Left lung (tissue), 14 donors: ENCODE measurements at regions of chr1 and their contacts with region 1.

Region 1: DNA sequence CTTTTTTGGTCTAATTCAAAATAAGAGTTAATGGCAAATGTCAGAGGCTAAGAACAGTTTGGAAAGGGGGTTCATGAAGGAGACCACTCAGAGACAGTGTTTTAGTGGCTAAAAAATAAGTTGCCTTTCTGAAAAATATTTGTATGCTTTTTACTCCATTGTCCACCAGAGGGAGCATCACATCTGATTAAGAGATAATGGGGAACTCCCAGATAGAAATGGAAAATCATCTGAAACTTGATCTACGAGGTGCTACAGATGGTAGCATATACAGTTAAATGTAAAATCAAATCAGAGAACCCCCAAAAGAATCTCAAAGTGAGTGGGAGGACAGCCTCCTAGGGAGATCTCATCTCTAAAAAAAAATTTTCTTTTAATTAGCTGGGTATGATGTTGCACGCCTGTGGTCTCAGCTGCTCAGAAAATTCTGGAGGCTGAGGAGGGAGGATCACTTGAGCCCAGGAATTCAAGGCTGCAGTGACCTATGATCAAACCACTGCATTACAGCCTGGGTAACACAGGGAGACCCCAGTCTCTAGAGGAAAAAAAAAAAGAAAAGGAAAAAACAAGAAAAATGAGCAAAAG is 9.7 kb downstream of the SMYD3 start:
- DNase-seq: peak in 1 of 4 donors; percentile 73
- ATAC-seq: peak; percentile 69
- H3K4me3 ChIP-seq: no peak overlapping the region
- H3K27ac ChIP-seq: no peak overlapping the region
- H3K4me1 ChIP-seq: peaks cover 0 to 6% of the 10 kb centered on the region in 2 donors
- H3K27me3 ChIP-seq: no peaks in the 10 kb centered on the region
- CTCF ChIP-seq: peak; percentile 67 to 68

Region 2: DNA sequence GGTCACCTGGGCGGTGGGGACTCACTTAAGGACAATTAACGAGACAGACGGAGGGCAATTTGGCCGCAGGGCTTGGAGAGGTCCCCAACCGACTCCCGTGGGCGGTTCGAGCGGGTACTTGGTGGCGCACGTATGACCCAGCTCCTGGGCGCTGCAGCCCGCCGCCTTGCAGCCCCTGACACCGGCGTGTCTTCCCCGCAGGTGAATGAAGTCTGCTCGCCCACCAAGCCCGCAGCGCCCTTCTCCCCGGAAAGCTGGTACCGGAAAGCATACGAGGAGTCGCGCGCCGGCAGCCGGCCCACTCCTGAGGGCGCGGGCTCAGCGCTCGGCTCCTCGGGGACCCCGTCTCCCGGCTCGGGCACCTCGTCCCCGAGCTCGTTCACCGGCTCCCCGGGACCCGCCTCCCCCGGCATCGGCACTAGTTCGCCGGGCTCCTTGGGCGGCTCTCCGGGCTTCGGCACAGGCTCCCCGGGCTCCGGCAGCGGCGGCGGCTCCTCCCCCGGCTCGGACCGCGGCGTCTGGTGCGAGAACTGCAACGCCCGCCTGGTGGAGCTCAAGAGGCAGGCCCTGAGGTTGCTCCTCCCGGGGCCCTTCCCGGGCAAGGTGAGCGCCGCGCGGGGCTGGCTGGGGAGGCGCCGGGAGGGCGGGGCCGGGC is 1341.2 kb before region 1 on chr1:
- intact Hi-C with region 1: loop called in 1 of 2 experiments (anchors 5 kb)
- DNase-seq: peak; percentile 68 to 95 (median 87)
- ATAC-seq: peak; percentile 94
- H3K4me3 ChIP-seq: peak overlapping the region; percentile 39 to 48
- H3K27ac ChIP-seq: no peak overlapping the region
- H3K4me1 ChIP-seq: peaks cover 4 to 47% of the 10 kb centered on the region in 2 donors
- H3K27me3 ChIP-seq: peaks cover 0 to 72% of the 10 kb centered on the region in 2 donors
- CTCF ChIP-seq: peak; percentile 81

Region 3: GRCh38 chr1:246383239-246383589 is 114.2 kb before region 1 on chr1:
- intact Hi-C with region 1: no loop called
- DNase-seq: no peak
- ATAC-seq: no peak
- H3K4me3 ChIP-seq: no peak overlapping the region
- H3K27ac ChIP-seq: no peak overlapping the region
- H3K4me1 ChIP-seq: no peaks in the 10 kb centered on the region
- H3K27me3 ChIP-seq: no peaks in the 10 kb centered on the region
- CTCF ChIP-seq: no peak

Region 4: DNA sequence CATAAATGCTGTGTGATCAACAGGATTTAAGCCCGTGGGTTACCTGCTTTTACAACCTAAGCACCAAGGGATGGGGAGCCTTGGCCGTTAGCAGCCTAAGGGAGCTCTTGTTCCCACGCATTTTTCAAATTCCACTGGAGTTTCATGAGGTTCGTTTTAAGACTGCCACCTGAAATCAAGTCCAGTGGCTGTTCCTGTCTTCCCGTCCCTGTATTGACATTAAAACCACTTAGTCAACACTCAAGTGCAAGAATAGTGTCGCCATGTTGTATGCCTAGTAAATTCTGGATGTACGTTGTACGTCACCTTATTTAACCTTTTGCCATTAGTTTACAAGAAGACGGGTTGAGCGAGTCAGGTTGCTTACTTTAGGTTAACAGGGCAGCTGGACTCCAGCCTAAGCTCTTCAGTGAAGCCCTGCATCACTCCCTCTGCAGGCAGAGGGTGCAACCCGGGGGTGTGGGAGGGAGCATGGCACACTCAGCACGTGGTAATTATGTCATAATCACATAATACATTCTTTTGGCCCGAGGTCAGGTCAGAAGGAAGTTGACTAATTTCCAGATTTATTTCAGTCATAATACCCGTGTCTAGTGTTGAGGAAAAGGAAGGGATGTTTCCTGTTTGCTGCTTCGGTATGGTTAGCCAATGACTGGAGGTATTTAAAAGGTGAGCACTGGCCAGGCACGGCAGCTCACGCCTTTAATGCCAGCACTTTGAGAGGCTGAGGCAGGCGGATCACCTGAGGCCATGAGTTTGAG is 111.4 kb after region 1 on chr1:
- intact Hi-C with region 1: no loop called
- DNase-seq: peak; percentile 57 to 91 (median 88)
- ATAC-seq: peak; percentile 97
- H3K4me3 ChIP-seq: no peak overlapping the region
- H3K27ac ChIP-seq: peak overlapping the region; percentile 67 to 80
- H3K4me1 ChIP-seq: peaks cover 9 to 25% of the 10 kb centered on the region in 2 donors
- H3K27me3 ChIP-seq: no peaks in the 10 kb centered on the region
- CTCF ChIP-seq: peak in 1 of 2 donors; percentile 21

Region 5: DNA sequence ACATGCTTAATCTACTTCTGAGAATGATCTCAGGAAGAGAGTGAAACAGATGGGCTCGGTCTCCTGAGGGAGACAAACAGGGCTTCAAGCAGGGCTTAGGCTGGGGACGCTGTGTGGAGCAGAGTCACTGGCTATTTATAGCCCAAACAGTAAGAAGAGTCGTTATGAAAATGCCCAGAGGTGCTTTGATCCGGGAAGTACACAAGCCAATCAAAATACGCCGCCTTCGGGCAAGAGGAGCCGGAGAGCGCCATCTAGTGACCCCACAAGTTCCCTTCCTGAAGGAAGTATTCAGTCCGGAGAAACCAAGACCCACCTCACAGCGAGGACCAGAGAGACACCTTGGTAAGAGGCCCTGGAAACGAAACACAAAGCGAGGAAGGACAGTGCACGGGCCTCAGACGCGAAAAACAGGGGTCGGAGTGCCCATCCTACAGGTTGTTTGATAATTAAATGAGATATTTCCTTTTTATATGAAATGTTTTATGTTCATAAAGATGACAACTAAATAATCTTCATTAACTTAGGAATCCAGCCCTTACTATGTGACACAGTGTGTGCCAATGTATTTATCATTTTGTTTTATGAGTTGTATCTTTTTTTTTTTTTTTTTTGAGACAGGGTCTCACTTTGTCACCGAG is 201.8 kb after region 1 on chr1:
- intact Hi-C with region 1: loop called in 1 of 2 experiments (anchors 5 kb)
- DNase-seq: peak; percentile 75 to 89 (median 86)
- ATAC-seq: peak; percentile 96
- H3K4me3 ChIP-seq: peak overlapping the region; percentile 10 to 24
- H3K27ac ChIP-seq: peak overlapping the region in 1 of 2 donors; percentile 37
- H3K4me1 ChIP-seq: peaks cover 5 to 23% of the 10 kb centered on the region in 2 donors
- H3K27me3 ChIP-seq: no peaks in the 10 kb centered on the region
- CTCF ChIP-seq: peak; percentile 83 to 84

Region 6: GRCh38 chr1:246724016-246724730 is 226.8 kb after region 1 on chr1 and contains the start of gene SCCPDH:
- intact Hi-C with region 1: no loop called
- DNase-seq: peak; percentile 77 to 92 (median 82)
- ATAC-seq: peak; percentile 97
- H3K4me3 ChIP-seq: peak within 1 kb of the TSS; percentile 80 to 97
- H3K27ac ChIP-seq: peak within 1 kb of the TSS; percentile 77 to 85
- H3K4me1 ChIP-seq: peaks cover 3 to 29% of the 10 kb centered on the region in 2 donors
- H3K27me3 ChIP-seq: no peaks in the 10 kb centered on the region
- CTCF ChIP-seq: no peak
- polyA plus RNA-seq, gene SCCPDH: 40.6 to 45.0 (median 43.7) TPM

Region 7: GRCh38 chr1:246753670-246754535 is 256.5 kb after region 1 on chr1:
- intact Hi-C with region 1: loop called in 1 of 2 experiments (anchors 5 kb)
- DNase-seq: peak in 2 of 4 donors; percentile 28 to 58
- ATAC-seq: peak; percentile 90
- H3K4me3 ChIP-seq: no peak overlapping the region
- H3K27ac ChIP-seq: no peak overlapping the region
- H3K4me1 ChIP-seq: no peaks in the 10 kb centered on the region
- H3K27me3 ChIP-seq: no peaks in the 10 kb centered on the region
- CTCF ChIP-seq: peak; percentile 58 to 62

Region 8: GRCh38 chr1:246794835-246795671 is 297.6 kb after region 1 on chr1:
- intact Hi-C with region 1: no loop called
- DNase-seq: no peak
- ATAC-seq: peak; percentile 50
- H3K4me3 ChIP-seq: no peak overlapping the region
- H3K27ac ChIP-seq: no peak overlapping the region
- H3K4me1 ChIP-seq: peaks cover 0 to 10% of the 10 kb centered on the region in 2 donors
- H3K27me3 ChIP-seq: peaks cover 0 to 15% of the 10 kb centered on the region in 2 donors
- CTCF ChIP-seq: no peak